ENCODE measurements at regions of chr4 and their contacts with region 1.

Region 1: DNA sequence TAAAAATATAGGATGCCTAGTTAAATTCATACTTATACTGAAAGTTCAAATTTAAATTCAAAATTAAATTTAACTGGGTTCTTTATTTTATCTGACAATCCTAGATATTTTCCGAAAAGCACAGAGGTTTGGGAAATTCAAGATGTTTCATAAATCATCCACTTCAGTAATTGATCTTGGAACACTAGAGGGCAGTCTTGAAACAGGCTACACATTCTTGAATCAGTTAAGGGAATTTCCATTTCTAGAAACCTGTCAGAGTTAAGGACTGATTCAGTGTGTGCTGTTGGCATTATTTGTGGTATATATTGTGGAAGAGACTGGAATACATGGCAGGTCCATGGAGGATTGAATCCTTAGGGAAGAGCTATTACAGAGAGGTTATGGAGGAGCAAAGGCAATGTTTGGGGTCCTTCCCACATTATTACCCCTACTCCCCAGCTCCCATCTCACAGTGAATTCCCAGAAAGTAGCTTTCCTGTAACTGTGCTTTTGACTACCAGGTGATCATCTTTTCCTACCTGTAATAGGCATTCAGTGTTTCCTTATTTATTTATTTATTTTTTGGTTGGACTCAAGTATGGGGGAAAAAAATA is 92.9 kb downstream of the EGF start:
- DNase-seq: peak; percentile 78
- ATAC-seq: peak; percentile 67
- H3K4me3 ChIP-seq: no peak overlapping the region
- H3K27ac ChIP-seq: no peak overlapping the region
- H3K4me1 ChIP-seq: no peaks in the 10 kb centered on the region
- H3K27me3 ChIP-seq: no peaks in the 10 kb centered on the region
- CTCF ChIP-seq: peak; percentile 95
- POLR2A ChIP-seq: no peak
- RAD21 ChIP-seq: peak; percentile 95

Region 2: DNA sequence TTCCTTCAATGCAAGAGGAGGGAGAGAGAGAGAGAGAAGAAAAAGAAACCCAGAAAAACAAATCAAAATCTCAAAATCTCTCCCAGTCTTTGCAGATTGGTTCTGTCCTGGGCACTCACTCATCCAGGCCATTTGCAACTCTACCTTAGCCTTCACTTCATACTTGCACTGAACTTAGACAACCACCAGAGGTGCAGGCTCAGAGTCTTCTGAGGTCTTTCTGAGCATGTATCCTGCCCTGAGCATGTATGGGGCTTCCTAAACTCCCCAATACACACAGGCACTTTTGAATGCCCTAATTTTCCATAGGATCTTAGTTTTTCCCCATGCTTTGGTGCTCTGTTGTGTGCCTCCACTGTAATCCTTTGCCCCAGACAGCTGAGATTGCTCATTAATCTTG is 206.7 kb before region 1 on chr4:
- CTCF ChIA-PET with region 1: no interaction called
- POLR2A ChIA-PET with region 1: no interaction called
- dilution Hi-C with region 1: no loop called
- in situ Hi-C with region 1: no loop called
- intact Hi-C with region 1: no loop called
- DNase-seq: no peak
- ATAC-seq: no peak
- H3K4me3 ChIP-seq: no peak overlapping the region
- H3K27ac ChIP-seq: no peak overlapping the region
- H3K4me1 ChIP-seq: no peaks in the 10 kb centered on the region
- H3K27me3 ChIP-seq: peaks cover 1% of the 10 kb centered on the region; the same call in 1 of the 2 replicates
- CTCF ChIP-seq: no peak
- POLR2A ChIP-seq: no peak
- RAD21 ChIP-seq: no peak

Region 3: DNA sequence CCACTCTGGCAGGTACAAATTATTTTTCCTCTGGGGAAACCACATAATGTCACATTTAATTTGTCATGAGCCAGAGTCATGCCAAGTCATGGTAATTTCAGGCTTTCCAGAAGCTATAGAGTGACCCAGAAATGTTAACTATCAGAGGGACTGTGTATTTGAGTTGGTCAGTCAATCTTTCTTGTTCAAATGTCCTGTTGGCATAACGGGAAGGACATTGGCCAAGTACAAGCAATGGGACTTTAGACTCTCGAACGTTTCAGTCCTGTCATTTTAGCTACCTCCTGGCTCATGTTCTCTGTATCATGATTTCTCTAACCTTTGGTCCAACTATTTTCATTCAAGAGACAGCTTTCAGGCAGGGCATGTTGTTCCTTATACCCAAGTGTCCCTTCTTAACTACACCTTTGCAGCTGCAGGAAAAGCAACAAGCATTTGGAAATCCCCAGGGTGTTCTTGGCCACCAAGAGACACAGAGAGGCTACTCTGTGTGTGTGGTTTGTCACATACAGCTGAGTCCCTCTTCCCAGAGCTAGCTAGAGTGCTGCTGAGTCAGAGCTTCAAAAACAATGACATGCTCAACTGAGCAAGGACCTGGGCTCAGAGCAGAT is 49.7 kb after region 1 on chr4:
- CTCF ChIA-PET with region 1: no interaction called
- POLR2A ChIA-PET with region 1: no interaction called
- dilution Hi-C with region 1: no loop called
- in situ Hi-C with region 1: no loop called
- intact Hi-C with region 1: no loop called
- DNase-seq: peak; percentile 28
- ATAC-seq: peak; percentile 74
- H3K4me3 ChIP-seq: no peak overlapping the region
- H3K27ac ChIP-seq: peak overlapping the region; percentile 17; the same call in 1 of the 2 replicates
- H3K4me1 ChIP-seq: peaks cover 7% of the 10 kb centered on the region; the same call in 1 of the 2 replicates
- H3K27me3 ChIP-seq: no peaks in the 10 kb centered on the region
- CTCF ChIP-seq: no peak
- POLR2A ChIP-seq: no peak
- RAD21 ChIP-seq: no peak

Region 4: DNA sequence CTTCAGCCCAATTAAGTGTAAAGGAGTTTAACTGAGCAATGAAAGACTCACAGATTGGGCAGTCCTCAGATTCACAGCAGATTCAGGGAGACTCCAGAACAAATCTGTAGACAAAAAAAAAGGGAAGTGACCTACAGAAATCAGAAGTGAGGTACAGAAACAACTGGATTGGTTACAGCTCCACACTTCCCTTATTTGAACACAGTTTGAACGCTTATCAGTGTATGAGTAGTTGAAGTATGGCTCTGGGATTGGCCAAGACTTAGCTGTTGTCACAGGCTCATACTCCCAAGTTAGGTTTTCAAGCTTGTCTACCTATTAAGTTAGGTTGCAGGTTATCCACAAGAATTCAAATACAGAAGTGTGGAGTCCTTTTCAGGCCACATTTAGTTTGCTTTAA is 305.2 kb after region 1 on chr4:
- CTCF ChIA-PET with region 1: no interaction called
- POLR2A ChIA-PET with region 1: no interaction called
- dilution Hi-C with region 1: no loop called
- in situ Hi-C with region 1: loop called (anchors 25 kb)
- intact Hi-C with region 1: loop called (anchors 5 kb)
- DNase-seq: no peak
- ATAC-seq: no peak
- H3K4me3 ChIP-seq: no peak overlapping the region
- H3K27ac ChIP-seq: no peak overlapping the region
- H3K4me1 ChIP-seq: no peaks in the 10 kb centered on the region
- H3K27me3 ChIP-seq: peaks cover 2% of the 10 kb centered on the region; the same call in 1 of the 2 replicates
- CTCF ChIP-seq: no peak
- POLR2A ChIP-seq: no peak
- RAD21 ChIP-seq: no peak